A673 (cell line): ENCODE measurements at regions of chr2 and their contacts with region 1.

Region 1: GRCh38 chr2:33552758-33553461 is 46.2 kb downstream of the FAM98A start:
- DNase-seq: no peak
- H3K4me3 ChIP-seq: no peak overlapping the region
- H3K27ac ChIP-seq: no peak overlapping the region
- H3K4me1 ChIP-seq: no peaks in the 10 kb centered on the region
- H3K27me3 ChIP-seq: no peaks in the 10 kb centered on the region
- CTCF ChIP-seq: no peak

Region 2: GRCh38 chr2:33531549-33532059 is 21.3 kb before region 1 on chr2:
- CTCF ChIA-PET with region 1: no interaction called
- POLR2A ChIA-PET with region 1: no interaction called
- intact Hi-C with region 1: loop called (anchors 2 kb)
- DNase-seq: no peak
- H3K4me3 ChIP-seq: no peak overlapping the region
- H3K27ac ChIP-seq: no peak overlapping the region
- H3K4me1 ChIP-seq: no peaks in the 10 kb centered on the region
- H3K27me3 ChIP-seq: no peaks in the 10 kb centered on the region
- CTCF ChIP-seq: no peak

Region 3: DNA sequence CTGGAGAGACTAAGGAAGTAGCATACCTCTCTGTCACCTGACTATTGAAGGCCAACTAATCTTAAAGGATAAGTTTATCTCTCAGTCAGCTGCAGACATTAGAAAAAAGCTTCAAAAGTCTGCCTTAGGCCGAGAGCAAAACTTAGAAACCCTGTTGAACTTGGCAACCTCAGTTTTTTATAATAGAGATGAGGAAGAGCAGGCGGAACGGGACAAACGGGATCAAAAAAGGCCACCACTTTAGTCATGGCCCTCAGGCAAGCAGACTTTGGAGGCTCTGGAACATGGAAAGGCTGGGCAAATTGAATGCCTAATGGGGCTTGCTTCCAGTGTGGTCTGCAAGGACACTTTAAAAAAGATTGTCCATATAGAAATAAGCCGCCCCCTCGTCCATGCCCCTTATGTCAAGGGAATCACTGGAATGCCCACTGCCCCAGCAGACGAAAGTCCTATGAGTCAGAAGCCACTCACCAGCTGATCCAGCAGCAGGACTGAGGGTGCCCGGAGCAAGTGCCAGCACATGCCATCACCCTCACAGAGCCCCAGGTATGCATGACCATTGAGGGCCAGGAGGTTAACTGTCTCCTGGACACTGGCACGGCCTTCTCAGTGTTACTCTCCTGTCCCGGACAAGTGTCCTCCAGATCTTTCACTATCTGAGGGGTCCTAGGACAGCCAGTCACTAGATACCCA is 107.7 kb after region 1 on chr2:
- CTCF ChIA-PET with region 1: no interaction called
- POLR2A ChIA-PET with region 1: no interaction called
- intact Hi-C with region 1: no loop called
- DNase-seq: no peak
- H3K4me3 ChIP-seq: no peak overlapping the region
- H3K27ac ChIP-seq: no peak overlapping the region
- H3K4me1 ChIP-seq: no peaks in the 10 kb centered on the region
- H3K27me3 ChIP-seq: peaks cover 2% of the 10 kb centered on the region
- CTCF ChIP-seq: no peak

Region 4: DNA sequence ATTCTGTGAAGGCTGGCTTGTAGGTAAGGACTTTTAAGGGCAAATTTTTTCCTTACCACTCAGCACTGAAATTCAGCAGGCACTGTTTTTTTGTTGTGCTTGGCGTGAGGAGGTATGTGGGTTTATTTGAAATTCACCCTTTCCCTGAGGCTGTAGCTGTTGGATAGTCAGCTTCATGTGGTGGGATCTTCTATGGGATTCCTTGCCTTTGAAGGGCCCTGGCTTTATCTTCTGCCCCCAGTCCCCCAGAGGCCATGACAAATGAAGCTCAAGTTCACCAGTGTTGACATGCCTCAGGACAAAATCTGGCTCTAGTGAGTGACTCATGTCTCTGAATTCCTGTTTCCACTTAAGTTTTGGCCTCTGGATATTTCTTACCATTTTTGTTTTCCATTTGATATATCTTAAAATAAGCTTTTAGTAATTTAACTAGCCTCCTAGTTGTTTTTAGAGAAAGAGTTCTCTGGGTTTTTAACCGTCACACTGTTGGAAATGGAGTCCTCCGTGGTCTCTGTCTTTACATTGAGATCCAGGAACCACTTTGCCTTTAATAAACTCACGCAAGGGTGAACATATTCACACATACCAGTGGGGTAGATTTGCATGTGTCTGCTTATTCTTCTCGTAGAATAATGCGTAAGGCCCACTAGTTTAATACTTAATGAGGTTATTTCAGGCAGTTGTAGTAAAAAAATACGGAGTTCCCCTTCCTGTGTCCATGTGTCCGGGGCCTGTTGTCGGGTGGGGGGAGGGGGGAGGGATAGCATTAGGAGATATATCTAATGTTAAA is 257.3 kb after region 1 on chr2:
- CTCF ChIA-PET with region 1: no interaction called
- POLR2A ChIA-PET with region 1: no interaction called
- intact Hi-C with region 1: no loop called
- DNase-seq: no peak
- H3K4me3 ChIP-seq: no peak overlapping the region
- H3K27ac ChIP-seq: no peak overlapping the region
- H3K4me1 ChIP-seq: no peaks in the 10 kb centered on the region
- H3K27me3 ChIP-seq: no peaks in the 10 kb centered on the region
- CTCF ChIP-seq: no peak